ENCODE measurements at regions of chr20 and their contacts with region 1.

Region 1: DNA sequence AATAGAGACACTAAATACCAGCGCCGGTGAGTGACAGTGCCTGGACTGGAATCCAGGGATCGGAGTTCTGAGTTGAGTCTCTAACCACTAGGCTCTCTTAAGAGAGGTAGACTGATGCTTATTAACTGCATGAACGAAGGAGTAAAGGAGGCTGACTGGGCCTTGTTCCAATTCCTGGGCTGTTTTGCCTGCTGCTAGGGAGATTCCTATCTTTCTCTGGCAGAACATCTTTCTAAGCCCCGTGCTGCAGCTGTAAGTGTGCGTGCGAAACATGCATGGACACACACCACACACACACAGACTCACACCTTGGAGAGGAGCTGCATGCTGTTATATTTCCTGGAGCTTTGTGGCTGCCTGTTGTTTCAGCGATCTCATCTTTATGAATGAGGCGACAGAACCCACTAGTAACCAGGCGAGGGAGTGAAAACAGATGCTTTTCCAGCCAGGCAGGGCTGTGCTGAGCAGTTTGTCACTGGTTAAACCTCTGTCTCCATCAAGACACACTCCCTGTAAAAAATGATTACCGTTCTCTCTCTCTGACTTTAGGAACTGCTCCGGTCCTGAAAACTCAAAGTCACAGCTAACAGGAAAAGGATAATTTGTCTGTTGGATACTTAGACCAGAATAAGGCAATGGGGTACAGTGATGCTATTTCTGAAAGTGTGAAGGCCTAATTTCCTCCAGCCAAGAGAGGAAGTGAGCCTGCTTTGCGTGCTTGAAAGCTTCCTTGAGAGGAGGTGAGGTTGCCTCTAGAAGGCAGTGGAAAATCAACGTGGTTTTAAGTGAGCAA is 157.4 kb upstream of the ZNF217 start:
- DNase-seq: no peak

Region 2: DNA sequence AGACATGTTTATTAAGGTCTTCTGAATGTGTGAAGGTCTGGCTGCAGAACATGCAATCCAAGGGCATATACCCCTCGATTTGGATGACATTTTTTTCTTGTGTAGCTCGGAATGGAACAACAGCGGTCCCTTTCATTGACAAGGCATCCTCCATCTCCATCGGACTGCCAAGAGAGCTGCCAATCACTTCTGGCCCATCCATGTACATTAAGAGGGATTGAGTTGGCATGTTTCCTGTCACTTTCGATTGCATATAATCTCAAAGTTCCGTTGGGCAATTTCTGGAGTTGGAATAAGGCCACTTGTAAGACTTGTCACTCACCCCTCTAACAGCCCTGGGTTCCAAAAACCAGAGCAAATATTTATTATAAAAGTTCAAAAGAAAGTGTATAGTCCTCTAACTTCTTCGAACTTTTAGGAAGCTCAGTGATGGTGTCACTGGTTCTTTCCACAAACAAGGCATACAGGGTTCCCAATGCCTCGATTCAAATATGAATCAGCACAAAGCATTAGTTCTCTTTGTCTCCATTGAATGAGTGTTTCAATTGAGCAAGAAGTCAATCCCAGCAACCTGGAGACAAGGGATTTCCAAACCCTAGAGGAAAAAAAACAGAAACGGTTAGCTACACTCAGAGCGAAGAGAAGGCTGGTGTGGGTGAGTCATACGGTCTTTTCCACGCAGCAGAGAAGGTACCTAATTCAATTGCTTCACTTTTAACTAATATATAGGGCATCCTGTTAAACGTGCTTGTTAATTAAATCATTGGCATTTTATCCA is 168.3 kb before region 1 on chr20:
- in situ Hi-C with region 1: loop called (anchors 10 kb)
- DNase-seq: no peak

Region 3: GRCh38 chr20:53656293-53657202 is 94.5 kb before region 1 on chr20:
- in situ Hi-C with region 1: loop called (anchors 5 kb)
- DNase-seq: peak; percentile 59

Measured in G401 (cell line).